ENCODE measurements at regions of chr7 and their contacts with region 1.

Region 1: GRCh38 chr7:139731802-139732470 is 45.9 kb downstream of the HIPK2 start:
- DNase-seq: peak; percentile 85 to 96
- ATAC-seq: peak; percentile 83 to 86
- H3K4me3 ChIP-seq: peak overlapping the region; percentile 20 to 33 (median 25)
- H3K27ac ChIP-seq: peak overlapping the region; percentile 91 to 93 (median 92)
- H3K4me1 ChIP-seq: peaks cover 67 to 73% of the 10 kb centered on the region in 2 donors
- H3K27me3 ChIP-seq: no peaks in the 10 kb centered on the region
- CTCF ChIP-seq: no peak
- POLR2A ChIP-seq: peak in 1 of 2 donors; percentile 56

Region 2: DNA sequence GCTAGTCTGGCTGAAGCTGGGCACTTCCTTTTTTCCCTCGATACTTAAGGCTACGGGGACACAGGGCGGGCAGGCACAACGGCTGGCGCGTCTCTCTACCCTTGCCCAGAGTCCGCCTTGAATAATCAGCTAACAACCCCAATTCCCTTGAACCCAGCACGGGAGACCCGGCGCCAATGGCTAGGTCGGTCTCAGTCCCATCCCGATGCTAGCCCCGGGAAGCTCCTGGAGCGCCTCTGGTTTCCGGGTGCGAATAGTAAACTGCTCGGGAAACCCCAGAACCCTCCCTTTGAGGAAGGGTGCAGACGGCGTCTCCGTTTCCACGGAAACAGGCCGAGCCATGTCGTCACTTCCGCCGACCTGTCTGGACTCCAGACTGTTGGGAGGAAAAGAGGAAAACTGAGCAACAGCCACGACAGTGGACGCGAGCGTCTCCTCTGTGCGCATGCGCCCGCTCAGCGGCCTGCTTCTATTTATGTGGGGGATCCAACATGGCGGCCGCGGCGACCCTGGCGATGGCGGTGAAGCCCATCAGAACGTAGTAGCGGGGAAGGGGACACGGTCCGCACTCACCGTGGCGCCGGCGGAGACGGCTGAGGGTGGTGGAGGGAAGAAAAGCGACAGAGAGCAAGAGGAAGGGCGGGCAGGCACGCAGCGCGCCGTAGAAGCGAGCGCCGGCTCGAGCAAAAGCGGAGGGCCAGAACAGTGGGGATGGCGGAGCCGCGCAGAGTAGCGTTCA is 501.0 kb before region 1 on chr7 and contains the start of gene UBN2:
- in situ Hi-C with region 1: loop called in 1 of 4 experiments (anchors 25 kb)
- intact Hi-C with region 1: no loop called
- DNase-seq: peak; percentile 91 to 93
- ATAC-seq: peak; percentile 98
- H3K4me3 ChIP-seq: peak within 1 kb of the TSS; percentile 83 to 99 (median 92)
- H3K27ac ChIP-seq: peak within 1 kb of the TSS; percentile 88 to 99 (median 96)
- H3K4me1 ChIP-seq: peaks cover 32 to 40% of the 10 kb centered on the region in 2 donors
- H3K27me3 ChIP-seq: no peaks in the 10 kb centered on the region
- CTCF ChIP-seq: no peak
- POLR2A ChIP-seq: peak; percentile 49 to 79
- total RNA-seq, gene UBN2: 12.0 to 24.8 (median 17.2) TPM

Region 3: GRCh38 chr7:139691253-139691781 is 40.6 kb before region 1 on chr7:
- in situ Hi-C with region 1: no loop called
- intact Hi-C with region 1: loop called (anchors 5 kb)
- DNase-seq: peak; percentile 65 to 92
- ATAC-seq: peak; percentile 84 to 93
- H3K4me3 ChIP-seq: no peak overlapping the region
- H3K27ac ChIP-seq: peak overlapping the region; percentile 72 to 81 (median 78)
- H3K4me1 ChIP-seq: peaks cover 31 to 35% of the 10 kb centered on the region in 2 donors
- H3K27me3 ChIP-seq: no peaks in the 10 kb centered on the region
- CTCF ChIP-seq: no peak
- POLR2A ChIP-seq: no peak

Region 4: GRCh38 chr7:139798221-139798620 is 66.3 kb after region 1 on chr7:
- in situ Hi-C with region 1: no loop called
- intact Hi-C with region 1: no loop called
- DNase-seq: no peak
- ATAC-seq: no peak
- H3K4me3 ChIP-seq: no peak overlapping the region
- H3K27ac ChIP-seq: no peak overlapping the region
- H3K4me1 ChIP-seq: no peaks in the 10 kb centered on the region
- H3K27me3 ChIP-seq: no peaks in the 10 kb centered on the region
- CTCF ChIP-seq: no peak
- POLR2A ChIP-seq: no peak